Mammary epithelial cell (primary cell): ENCODE measurements at regions of chr11 and their contacts with region 1.

Region 1: DNA sequence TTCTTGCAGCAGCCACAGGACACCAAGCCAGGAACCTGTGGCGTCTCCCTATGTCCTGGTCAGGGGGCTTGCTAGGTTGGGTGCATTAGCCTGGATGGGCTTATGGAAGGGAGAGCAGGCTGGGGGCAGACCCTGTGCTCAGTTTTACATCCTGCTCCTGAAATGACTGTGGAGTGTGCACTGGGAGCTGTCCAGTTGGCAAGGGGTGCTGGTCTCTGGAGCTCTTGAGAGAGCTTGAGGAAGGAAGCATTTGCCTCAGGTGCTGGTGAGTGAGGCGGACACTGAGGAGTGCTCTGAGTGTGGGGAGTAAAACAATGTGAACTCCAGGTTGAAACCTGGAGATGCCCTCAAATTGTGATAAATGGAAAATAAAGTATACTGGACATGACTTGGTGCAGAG is 3.4 kb downstream of the SCGB1D4 start:
- DNase-seq: peak; percentile 17
- H3K4me3 ChIP-seq: no peak overlapping the region
- H3K27ac ChIP-seq: no peak overlapping the region
- H3K4me1 ChIP-seq: no peaks in the 10 kb centered on the region
- H3K27me3 ChIP-seq: peaks cover 9% of the 10 kb centered on the region
- CTCF ChIP-seq: no peak

Region 2: GRCh38 chr11:62245271-62245753 is 50.2 kb before region 1 on chr11:
- CTCF ChIA-PET with region 1: interaction called, 3 read pairs
- dilution Hi-C with region 1: no loop called
- in situ Hi-C with region 1: no loop called
- intact Hi-C with region 1: loop called (anchors 5 kb)
- DNase-seq: peak; percentile 26
- H3K4me3 ChIP-seq: no peak overlapping the region
- H3K27ac ChIP-seq: no peak overlapping the region
- H3K4me1 ChIP-seq: no peaks in the 10 kb centered on the region
- H3K27me3 ChIP-seq: no peaks in the 10 kb centered on the region
- CTCF ChIP-seq: peak in 1 of 2 donors; percentile 22